Psoas muscle (tissue), 8 donors: ENCODE measurements at regions of chr22 and their contacts with region 1.

Region 1: GRCh38 chr22:22593964-22594656 is 35.0 kb upstream of the PRAME start:
- DNase-seq: no peak
- ATAC-seq: no peak
- H3K4me3 ChIP-seq: no peak overlapping the region
- H3K27ac ChIP-seq: no peak overlapping the region
- H3K4me1 ChIP-seq: no peaks in the 10 kb centered on the region
- H3K27me3 ChIP-seq: no peaks in the 10 kb centered on the region
- CTCF ChIP-seq: peak; percentile 39

Region 2: GRCh38 chr22:22877523-22878210 is 283.6 kb after region 1 on chr22:
- intact Hi-C with region 1: loop called in 1 of 2 experiments (anchors 10 kb)
- DNase-seq: peak in 1 of 2 donors; percentile 69
- ATAC-seq: no peak
- H3K4me3 ChIP-seq: no peak overlapping the region
- H3K27ac ChIP-seq: no peak overlapping the region
- H3K4me1 ChIP-seq: no peaks in the 10 kb centered on the region
- H3K27me3 ChIP-seq: peaks cover 0 to 11% (median 4%) of the 10 kb centered on the region in 3 donors
- CTCF ChIP-seq: peak; percentile 48

Region 3: GRCh38 chr22:22914726-22915669 is 320.9 kb after region 1 on chr22:
- intact Hi-C with region 1: no loop called
- DNase-seq: peak in 1 of 2 donors; percentile 18
- ATAC-seq: no peak
- H3K4me3 ChIP-seq: no peak overlapping the region
- H3K27ac ChIP-seq: no peak overlapping the region
- H3K4me1 ChIP-seq: no peaks in the 10 kb centered on the region
- H3K27me3 ChIP-seq: peaks cover 0 to 11% (median 4%) of the 10 kb centered on the region in 3 donors
- CTCF ChIP-seq: no peak